Activated B cell treated with CpG ODN at 0.5 μM for 24 hours (primary cell): ENCODE measurements at regions of chr10 and their contacts with region 1.

Region 1: GRCh38 chr10:70146489-70147258 is at the start of gene TYSND1:
- DNase-seq: no peak
- ATAC-seq: peak; percentile 80
- H3K4me3 Mint-ChIP-seq: peak within 1 kb of the TSS; percentile 95
- H3K27ac Mint-ChIP-seq: peak within 1 kb of the TSS; percentile 96
- H3K4me1 Mint-ChIP-seq: peaks cover 27% of the 10 kb centered on the region
- H3K27me3 Mint-ChIP-seq: no peaks in the 10 kb centered on the region
- CTCF ChIP-seq: no peak
- total RNA-seq, gene TYSND1: 18.2 and 22.0 TPM in 2 replicates

Region 2: DNA sequence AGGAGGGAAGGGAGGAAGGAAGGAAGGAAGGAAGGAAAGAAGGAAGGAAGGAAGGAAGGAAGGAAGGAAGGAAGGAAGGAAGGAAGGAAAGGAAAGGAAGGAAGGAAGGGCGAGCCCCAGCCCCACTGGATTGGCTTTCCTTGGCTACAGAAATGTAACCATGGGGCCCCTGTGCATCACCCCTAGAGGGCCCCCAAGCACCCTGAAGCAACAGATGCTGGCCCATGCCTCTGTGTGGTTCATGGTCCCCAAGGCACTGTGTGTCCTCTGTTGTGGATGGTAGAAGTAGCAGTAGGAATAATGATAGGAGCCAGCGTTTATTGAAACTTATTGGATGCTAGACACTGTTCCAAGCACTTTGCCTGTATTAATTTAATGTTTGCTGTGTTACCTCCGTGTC is 210.6 kb before region 1 on chr10:
- CTCF ChIA-PET with region 1: no interaction called
- POLR2A ChIA-PET with region 1: no interaction called
- intact Hi-C with region 1: loop called (anchors 5 kb)
- DNase-seq: no peak
- ATAC-seq: peak; percentile 52
- H3K4me3 Mint-ChIP-seq: no peak overlapping the region
- H3K27ac Mint-ChIP-seq: no peak overlapping the region
- H3K4me1 Mint-ChIP-seq: no peaks in the 10 kb centered on the region
- H3K27me3 Mint-ChIP-seq: no peaks in the 10 kb centered on the region
- CTCF ChIP-seq: no peak

Region 3: DNA sequence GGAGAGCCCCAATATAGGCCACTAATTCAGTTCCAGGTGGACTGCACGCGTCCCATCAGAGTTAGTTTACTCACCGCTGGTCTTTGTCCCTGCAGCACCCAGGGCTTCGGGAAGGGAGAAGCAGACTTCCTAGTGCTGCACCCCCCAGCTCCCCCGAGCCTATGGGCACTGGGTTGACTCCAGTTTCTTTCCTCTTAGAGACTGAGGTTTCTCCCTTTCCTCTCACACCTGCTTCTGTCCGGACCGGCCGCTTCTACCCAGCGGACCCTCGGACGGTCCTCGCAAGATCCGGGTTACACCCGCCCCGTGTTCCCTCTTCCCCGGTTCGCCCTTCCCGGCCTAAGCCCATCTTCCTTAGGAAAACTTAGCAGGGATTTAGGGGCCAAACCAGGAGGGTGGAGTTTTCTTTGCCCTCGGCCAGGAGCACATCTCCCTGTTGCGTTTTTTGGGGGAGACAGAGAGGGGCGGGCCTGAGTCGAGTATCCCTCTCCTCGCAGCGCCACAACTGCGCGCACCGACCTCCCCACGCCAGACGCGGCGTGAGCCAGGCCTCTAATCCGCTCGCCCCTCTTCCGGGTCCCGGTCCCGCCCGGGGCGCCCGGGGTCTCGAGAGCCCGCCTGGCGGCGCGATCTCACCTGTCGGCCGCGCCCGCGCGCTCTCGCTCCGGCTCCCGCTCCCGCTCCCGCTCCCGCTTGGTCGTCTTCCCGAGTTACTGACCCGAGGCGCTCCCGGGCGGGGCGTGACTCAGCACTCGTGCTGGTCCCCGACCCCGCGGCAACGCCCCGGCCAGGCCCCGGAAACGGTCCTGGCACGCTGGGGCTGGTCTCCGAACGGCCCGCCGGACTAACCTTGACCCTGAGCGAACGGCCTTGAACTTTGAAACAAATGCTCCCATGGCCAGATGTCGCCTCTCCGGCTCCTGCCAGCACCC is 14.3 kb before region 1 on chr10 and contains the start of gene AIFM2:
- CTCF ChIA-PET with region 1: interaction called, 8 read pairs
- POLR2A ChIA-PET with region 1: interaction called, 9 read pairs
- intact Hi-C with region 1: loop called (anchors 1 kb)
- DNase-seq: peak; percentile 55
- ATAC-seq: peak; percentile 87
- H3K4me3 Mint-ChIP-seq: peak within 1 kb of the TSS; percentile 90
- H3K27ac Mint-ChIP-seq: peak within 1 kb of the TSS; percentile 82
- H3K4me1 Mint-ChIP-seq: peaks cover 19% of the 10 kb centered on the region
- H3K27me3 Mint-ChIP-seq: no peaks in the 10 kb centered on the region
- CTCF ChIP-seq: no peak
- total RNA-seq, gene AIFM2: 8.9 and 10.8 TPM in 2 replicates

Region 4: GRCh38 chr10:70363971-70364771 is 217.5 kb after region 1 on chr10:
- CTCF ChIA-PET with region 1: interaction called, 18 read pairs
- POLR2A ChIA-PET with region 1: no interaction called
- intact Hi-C with region 1: loop called (anchors 1 kb)
- DNase-seq: peak; percentile 74
- ATAC-seq: peak; percentile 99
- H3K4me3 Mint-ChIP-seq: peak overlapping the region; percentile 24
- H3K27ac Mint-ChIP-seq: no peak overlapping the region
- H3K4me1 Mint-ChIP-seq: peaks cover 15% of the 10 kb centered on the region
- H3K27me3 Mint-ChIP-seq: peaks cover 2% of the 10 kb centered on the region
- CTCF ChIP-seq: peak; percentile 25

Region 5: GRCh38 chr10:70815504-70816219 is 669.0 kb after region 1 on chr10 and contains the start of gene SGPL1:
- CTCF ChIA-PET with region 1: no interaction called
- POLR2A ChIA-PET with region 1: interaction called, 3 read pairs
- intact Hi-C with region 1: loop called (anchors 1 kb)
- DNase-seq: peak; percentile 90
- ATAC-seq: peak; percentile 95
- H3K4me3 Mint-ChIP-seq: peak within 1 kb of the TSS; percentile 90
- H3K27ac Mint-ChIP-seq: peak within 1 kb of the TSS; percentile 82
- H3K4me1 Mint-ChIP-seq: peaks cover 26% of the 10 kb centered on the region
- H3K27me3 Mint-ChIP-seq: peaks cover 2% of the 10 kb centered on the region
- CTCF ChIP-seq: no peak
- total RNA-seq, gene SGPL1: 35.9 and 36.3 TPM in 2 replicates